ENCODE measurements at regions of chr6 and their contacts with region 1.

Region 1: GRCh38 chr6:34526992-34527728 is 29.0 kb downstream of the SPDEF start:
- DNase-seq: peak; percentile 92 to 93
- ATAC-seq: peak; percentile 84 to 86
- H3K4me3 ChIP-seq: peak overlapping the region; percentile 34 to 48 (median 43)
- H3K27ac ChIP-seq: peak overlapping the region; percentile 67 to 78 (median 69)
- H3K4me1 ChIP-seq: peaks cover 6 to 10% of the 10 kb centered on the region in 2 donors
- H3K27me3 ChIP-seq: no peaks in the 10 kb centered on the region
- CTCF ChIP-seq: peak; percentile 71 to 89 (median 80)
- POLR2A ChIP-seq: no peak

Region 2: DNA sequence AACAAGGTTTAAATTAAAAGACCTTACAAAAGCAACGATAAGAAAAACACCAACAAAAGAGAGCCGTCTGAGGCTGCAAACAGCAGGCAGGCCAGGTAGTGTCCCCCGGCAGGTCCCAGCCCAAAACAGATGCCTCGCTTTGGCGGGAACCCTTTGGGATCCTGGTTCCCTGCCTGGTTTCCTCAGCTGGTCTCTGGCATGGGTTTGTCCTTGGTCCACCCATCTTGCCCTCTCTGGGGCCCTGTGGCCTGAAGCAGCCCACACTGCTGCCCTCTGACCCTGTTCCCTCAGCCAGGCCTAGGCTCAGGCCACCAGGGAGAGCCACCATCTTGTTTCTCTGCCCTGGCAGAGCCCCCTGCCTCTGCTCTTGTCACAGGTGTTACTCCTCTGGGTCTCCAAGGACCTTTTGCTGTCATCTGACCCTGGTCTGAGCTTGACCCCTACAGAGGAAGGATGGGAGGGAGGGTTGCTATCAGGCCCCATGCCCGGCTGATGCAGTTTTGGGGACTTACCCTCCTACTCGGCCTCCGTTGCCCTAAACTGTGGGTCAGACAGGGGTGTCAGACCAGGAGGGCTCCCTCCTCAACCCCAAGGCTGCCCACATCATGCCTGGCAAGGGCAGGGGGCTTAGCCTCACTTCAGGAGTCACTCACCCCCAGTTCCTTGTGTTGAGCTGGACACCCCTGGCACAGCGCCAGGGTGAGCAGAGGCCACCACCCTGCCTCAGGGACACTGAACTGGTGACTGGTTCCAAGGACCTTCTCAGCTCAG is 350.7 kb before region 1 on chr6:
- in situ Hi-C with region 1: no loop called
- intact Hi-C with region 1: no loop called
- DNase-seq: no peak
- ATAC-seq: no peak
- H3K4me3 ChIP-seq: no peak overlapping the region
- H3K27ac ChIP-seq: no peak overlapping the region
- H3K4me1 ChIP-seq: no peaks in the 10 kb centered on the region
- H3K27me3 ChIP-seq: no peaks in the 10 kb centered on the region
- CTCF ChIP-seq: no peak
- POLR2A ChIP-seq: no peak

Region 3: GRCh38 chr6:34491091-34491430 is 36.1 kb before region 1 on chr6:
- in situ Hi-C with region 1: no loop called
- intact Hi-C with region 1: no loop called
- DNase-seq: peak in 1 of 2 donors; percentile 33
- ATAC-seq: peak; percentile 72 to 81
- H3K4me3 ChIP-seq: peak overlapping the region in 2 of 4 donors; percentile 21 to 36
- H3K27ac ChIP-seq: peak overlapping the region in 3 of 4 donors; percentile 53 to 78 (median 56)
- H3K4me1 ChIP-seq: peaks cover 0 to 6% of the 10 kb centered on the region in 2 donors
- H3K27me3 ChIP-seq: no peaks in the 10 kb centered on the region
- CTCF ChIP-seq: no peak
- POLR2A ChIP-seq: no peak

Region 4: GRCh38 chr6:34602318-34603111 is 75.4 kb after region 1 on chr6:
- in situ Hi-C with region 1: loop called in 3 of 4 experiments (anchors 5 to 10 kb)
- intact Hi-C with region 1: no loop called
- DNase-seq: peak; percentile 63 to 76
- ATAC-seq: peak; percentile 72 to 73
- H3K4me3 ChIP-seq: no peak overlapping the region
- H3K27ac ChIP-seq: peak overlapping the region; percentile 65 to 92 (median 80)
- H3K4me1 ChIP-seq: peaks cover 68 to 71% of the 10 kb centered on the region in 2 donors
- H3K27me3 ChIP-seq: no peaks in the 10 kb centered on the region
- CTCF ChIP-seq: no peak
- POLR2A ChIP-seq: no peak

Region 5: GRCh38 chr6:34696739-34697543 is 169.8 kb after region 1 on chr6 and contains the start of gene ILRUN:
- in situ Hi-C with region 1: no loop called
- intact Hi-C with region 1: loop called (anchors 2 kb)
- DNase-seq: peak; percentile 92 to 94
- ATAC-seq: peak; percentile 78 to 80
- H3K4me3 ChIP-seq: peak within 1 kb of the TSS; percentile 79 to 100 (median 95)
- H3K27ac ChIP-seq: peak within 1 kb of the TSS; percentile 99 to 100 (median 100)
- H3K4me1 ChIP-seq: peaks cover 30 to 31% of the 10 kb centered on the region in 2 donors
- H3K27me3 ChIP-seq: no peaks in the 10 kb centered on the region
- CTCF ChIP-seq: no peak
- POLR2A ChIP-seq: peak; percentile 76 to 87
- total RNA-seq, gene ILRUN: 136 to 252 (median 169) TPM

Region 6: GRCh38 chr6:34791701-34792235 is 264.6 kb after region 1 on chr6 and contains the start of gene BLTP3A:
- in situ Hi-C with region 1: no loop called
- intact Hi-C with region 1: loop called (anchors 1 kb)
- DNase-seq: peak; percentile 41 to 66
- ATAC-seq: peak; percentile 85 to 87
- H3K4me3 ChIP-seq: peak within 1 kb of the TSS; percentile 87 to 95 (median 93)
- H3K27ac ChIP-seq: peak within 1 kb of the TSS; percentile 93 to 98 (median 96)
- H3K4me1 ChIP-seq: peaks cover 5 to 14% of the 10 kb centered on the region in 2 donors
- H3K27me3 ChIP-seq: no peaks in the 10 kb centered on the region
- CTCF ChIP-seq: peak in 3 of 5 experiments; percentile 11 to 34 (median 28)
- POLR2A ChIP-seq: peak; percentile 72 to 85
- total RNA-seq, gene BLTP3A: 19.9 to 36.0 (median 23.2) TPM

Measured in gastrocnemius medialis (tissue), 4 donors.